ENCODE measurements at regions of chrX and their contacts with region 1.

Region 1: GRCh38 chrX:123960042-123960611 is 1.4 kb upstream of the STAG2 start:
- DNase-seq: peak; percentile 85
- ATAC-seq: peak; percentile 71
- H3K4me3 ChIP-seq: peak overlapping the region; percentile 57
- H3K27ac ChIP-seq: peak overlapping the region; percentile 82
- H3K4me1 ChIP-seq: no peaks in the 10 kb centered on the region
- H3K27me3 ChIP-seq: no peaks in the 10 kb centered on the region
- CTCF ChIP-seq: peak; percentile 94
- POLR2A ChIP-seq: peak; percentile 60
- RAD21 ChIP-seq: peak; percentile 84

Region 2: GRCh38 chrX:123833387-123833786 is 126.7 kb before region 1 on chrX:
- CTCF ChIA-PET with region 1: interaction called, 3 read pairs
- POLR2A ChIA-PET with region 1: no interaction called
- dilution Hi-C with region 1: no loop called
- in situ Hi-C with region 1: no loop called
- intact Hi-C with region 1: loop called (anchors 1 kb)
- DNase-seq: peak; percentile 39
- ATAC-seq: peak; percentile 89
- H3K4me3 ChIP-seq: no peak overlapping the region
- H3K27ac ChIP-seq: no peak overlapping the region
- H3K4me1 ChIP-seq: no peaks in the 10 kb centered on the region
- H3K27me3 ChIP-seq: no peaks in the 10 kb centered on the region
- CTCF ChIP-seq: peak; percentile 68
- POLR2A ChIP-seq: no peak
- RAD21 ChIP-seq: peak; percentile 85

Region 3: GRCh38 chrX:124018023-124018422 is 57.9 kb after region 1 on chrX:
- CTCF ChIA-PET with region 1: interaction called, 4 read pairs
- POLR2A ChIA-PET with region 1: no interaction called
- dilution Hi-C with region 1: no loop called
- in situ Hi-C with region 1: no loop called
- intact Hi-C with region 1: loop called (anchors 1 kb)
- DNase-seq: peak; percentile 5
- ATAC-seq: no peak
- H3K4me3 ChIP-seq: no peak overlapping the region
- H3K27ac ChIP-seq: no peak overlapping the region
- H3K4me1 ChIP-seq: peaks cover 1% of the 10 kb centered on the region; the same call in 1 of the 2 replicates
- H3K27me3 ChIP-seq: no peaks in the 10 kb centered on the region
- CTCF ChIP-seq: peak; percentile 33
- POLR2A ChIP-seq: no peak
- RAD21 ChIP-seq: no peak; the same call in 1 of the 2 replicates

Region 4: DNA sequence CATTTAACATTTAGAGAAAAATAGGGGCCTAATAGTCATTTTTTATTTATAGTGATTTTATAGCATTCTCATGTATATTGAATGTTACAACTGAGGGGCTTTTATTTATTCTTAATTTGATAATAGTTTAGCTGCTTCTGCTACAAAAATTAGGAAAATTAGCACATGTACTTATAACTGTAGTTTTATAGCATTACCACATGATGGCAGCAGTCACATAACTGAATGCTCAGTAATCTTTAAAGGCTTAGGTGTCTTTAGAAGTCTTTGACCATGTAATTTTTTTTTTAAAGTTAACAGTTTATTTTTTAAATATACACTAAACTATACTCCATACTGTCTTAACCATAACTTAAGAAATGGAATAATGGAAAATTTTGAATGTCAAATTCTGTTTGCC is 138.0 kb after region 1 on chrX:
- CTCF ChIA-PET with region 1: no interaction called
- POLR2A ChIA-PET with region 1: no interaction called
- dilution Hi-C with region 1: no loop called
- in situ Hi-C with region 1: no loop called
- intact Hi-C with region 1: loop called (anchors 5 kb)
- DNase-seq: peak; percentile 51
- ATAC-seq: peak; percentile 80
- H3K4me3 ChIP-seq: no peak overlapping the region
- H3K27ac ChIP-seq: no peak overlapping the region
- H3K4me1 ChIP-seq: no peaks in the 10 kb centered on the region
- H3K27me3 ChIP-seq: no peaks in the 10 kb centered on the region
- CTCF ChIP-seq: peak; percentile 56
- POLR2A ChIP-seq: no peak
- RAD21 ChIP-seq: peak; percentile 33

Region 5: GRCh38 chrX:124211312-124211942 is 251.3 kb after region 1 on chrX:
- CTCF ChIA-PET with region 1: no interaction called
- POLR2A ChIA-PET with region 1: no interaction called
- dilution Hi-C with region 1: no loop called
- in situ Hi-C with region 1: no loop called
- intact Hi-C with region 1: loop called (anchors 5 kb)
- DNase-seq: peak; percentile 3
- ATAC-seq: peak; percentile 63; the same call in 1 of the 2 replicates
- H3K4me3 ChIP-seq: no peak overlapping the region
- H3K27ac ChIP-seq: no peak overlapping the region
- H3K4me1 ChIP-seq: no peaks in the 10 kb centered on the region
- H3K27me3 ChIP-seq: no peaks in the 10 kb centered on the region
- CTCF ChIP-seq: peak; percentile 37
- POLR2A ChIP-seq: no peak
- RAD21 ChIP-seq: no peak

Region 6: GRCh38 chrX:124223524-124223923 is 263.4 kb after region 1 on chrX:
- CTCF ChIA-PET with region 1: no interaction called
- POLR2A ChIA-PET with region 1: no interaction called
- dilution Hi-C with region 1: no loop called
- in situ Hi-C with region 1: no loop called
- intact Hi-C with region 1: no loop called
- DNase-seq: no peak
- ATAC-seq: no peak
- H3K4me3 ChIP-seq: no peak overlapping the region
- H3K27ac ChIP-seq: no peak overlapping the region
- H3K4me1 ChIP-seq: no peaks in the 10 kb centered on the region
- H3K27me3 ChIP-seq: no peaks in the 10 kb centered on the region
- CTCF ChIP-seq: no peak
- POLR2A ChIP-seq: no peak
- RAD21 ChIP-seq: no peak

Region 7: DNA sequence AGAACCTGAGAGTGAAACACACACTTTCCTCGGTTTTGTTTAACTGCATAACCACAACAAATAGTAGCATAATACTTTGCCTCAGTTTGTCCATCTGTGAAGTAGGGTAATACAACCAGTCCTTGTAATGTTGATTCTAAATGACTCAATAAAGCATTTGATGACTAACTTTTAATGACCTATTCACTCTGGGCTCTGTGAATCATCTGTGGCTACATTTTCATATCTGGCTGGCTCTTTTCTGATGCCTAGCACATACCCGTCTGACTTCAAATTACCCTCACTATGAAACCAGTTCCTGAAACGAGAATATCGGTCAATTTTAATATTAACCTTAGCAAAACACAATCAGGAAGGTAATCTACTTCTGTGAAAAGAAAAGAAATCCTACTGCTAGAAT is 537.3 kb after region 1 on chrX:
- CTCF ChIA-PET with region 1: no interaction called
- POLR2A ChIA-PET with region 1: no interaction called
- dilution Hi-C with region 1: no loop called
- in situ Hi-C with region 1: no loop called
- intact Hi-C with region 1: no loop called
- DNase-seq: no peak
- ATAC-seq: no peak
- H3K4me3 ChIP-seq: no peak overlapping the region
- H3K27ac ChIP-seq: no peak overlapping the region
- H3K4me1 ChIP-seq: no peaks in the 10 kb centered on the region
- H3K27me3 ChIP-seq: no peaks in the 10 kb centered on the region
- CTCF ChIP-seq: no peak
- POLR2A ChIP-seq: no peak
- RAD21 ChIP-seq: no peak

Measured in IMR-90 (cell line).